Naive thymus-derived CD4-positive, alpha-beta T cell (primary cell): ENCODE measurements at regions of chr6 and their contacts with region 1.

Region 1: GRCh38 chr6:42532038-42532669 is 31.7 kb upstream of the UBR2 start:
- DNase-seq: peak in 7 of 9 donors; percentile 15 to 50 (median 39)
- ATAC-seq: peak; percentile 47
- H3K4me3 ChIP-seq: no peak overlapping the region
- H3K4me3 Mint-ChIP-seq: no peak overlapping the region
- H3K27ac ChIP-seq: no peak overlapping the region
- H3K27ac Mint-ChIP-seq: no peak overlapping the region
- H3K4me1 ChIP-seq: no peaks in the 10 kb centered on the region
- H3K4me1 Mint-ChIP-seq: no peaks in the 10 kb centered on the region
- H3K27me3 ChIP-seq: no peaks in the 10 kb centered on the region
- H3K27me3 Mint-ChIP-seq: no peaks in the 10 kb centered on the region

Region 2: DNA sequence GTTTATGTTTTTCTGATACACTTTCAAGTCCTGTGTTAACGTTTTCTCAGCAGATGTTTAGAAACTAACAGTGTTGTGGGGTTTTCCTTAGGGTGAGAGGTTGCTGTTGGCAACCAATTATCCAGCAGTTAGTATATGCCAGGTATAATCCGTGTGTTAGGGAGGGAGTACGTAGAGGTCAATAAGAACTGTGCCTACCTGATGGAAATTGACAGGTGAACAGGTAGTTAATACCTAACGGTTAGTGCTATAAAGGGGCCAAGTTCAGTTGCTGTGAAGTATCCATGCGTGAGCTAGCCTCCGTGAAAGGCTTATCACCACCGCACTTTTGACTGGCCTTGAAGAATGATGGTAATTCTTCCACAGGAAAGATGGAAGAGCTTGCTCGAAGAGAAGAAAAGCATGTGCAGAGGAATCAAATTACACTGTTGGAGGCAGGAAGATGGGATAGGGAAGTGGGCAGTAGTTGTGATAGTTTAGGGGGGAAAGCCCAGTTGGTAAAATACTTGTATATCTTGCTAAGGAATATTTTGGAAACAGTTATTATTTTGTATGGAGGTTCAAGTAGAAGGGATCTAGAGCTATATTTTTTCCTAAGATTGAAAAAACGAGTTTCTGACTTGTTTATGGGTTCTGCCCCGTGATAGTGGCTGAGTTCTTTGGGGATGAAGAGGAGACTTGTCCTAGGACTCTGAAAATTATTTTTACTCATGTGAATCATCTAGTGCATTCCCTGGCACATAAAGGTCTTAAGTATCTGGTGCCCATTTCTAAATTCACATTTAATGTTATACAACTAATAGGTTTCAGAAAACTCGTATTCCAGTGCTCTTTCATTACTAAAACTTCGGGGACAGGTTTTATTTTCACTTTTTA is 1457.7 kb before region 1 on chr6:
- CTCF ChIA-PET with region 1: no interaction called
- POLR2A ChIA-PET with region 1: no interaction called
- intact Hi-C with region 1: no loop called
- DNase-seq: peak in 5 of 9 donors; percentile 11 to 54 (median 26)
- ATAC-seq: no peak
- H3K4me3 ChIP-seq: peak overlapping the region; percentile 78
- H3K4me3 Mint-ChIP-seq: peak overlapping the region; percentile 88 to 98 (median 94)
- H3K27ac ChIP-seq: peak overlapping the region; percentile 95
- H3K27ac Mint-ChIP-seq: peak overlapping the region; percentile 93 to 99 (median 95)
- H3K4me1 ChIP-seq: peaks cover 31 to 33% of the 10 kb centered on the region in 2 donors
- H3K4me1 Mint-ChIP-seq: peaks cover 41 to 79% (median 71%) of the 10 kb centered on the region in 7 donors
- H3K27me3 ChIP-seq: no peaks in the 10 kb centered on the region
- H3K27me3 Mint-ChIP-seq: peaks cover 0 to 5% (median 0%) of the 10 kb centered on the region in 5 donors

Region 3: GRCh38 chr6:42260972-42261371 is 271.2 kb before region 1 on chr6:
- CTCF ChIA-PET with region 1: interaction called, 7 read pairs
- POLR2A ChIA-PET with region 1: no interaction called
- intact Hi-C with region 1: loop called (anchors 1 to 5 kb)
- DNase-seq: peak in 6 of 9 donors; percentile 11 to 42 (median 34)
- ATAC-seq: peak; percentile 71
- H3K4me3 ChIP-seq: no peak overlapping the region
- H3K4me3 Mint-ChIP-seq: no peak overlapping the region
- H3K27ac ChIP-seq: no peak overlapping the region
- H3K27ac Mint-ChIP-seq: peak overlapping the region in 2 of 9 donors; percentile 38 to 60
- H3K4me1 ChIP-seq: peaks cover 0 to 7% of the 10 kb centered on the region in 2 donors
- H3K4me1 Mint-ChIP-seq: peaks cover 0 to 14% (median 4%) of the 10 kb centered on the region in 7 donors
- H3K27me3 ChIP-seq: no peaks in the 10 kb centered on the region
- H3K27me3 Mint-ChIP-seq: no peaks in the 10 kb centered on the region